ENCODE measurements at regions of chr12 and their contacts with region 1.

Region 1: GRCh38 chr12:52884526-52885293 is 20.2 kb downstream of the KRT8 start:
- DNase-seq: peak; percentile 66
- ATAC-seq: peak; percentile 83
- H3K4me3 Mint-ChIP-seq: no peak overlapping the region
- H3K27ac Mint-ChIP-seq: no peak overlapping the region
- H3K4me1 Mint-ChIP-seq: peaks cover 5% of the 10 kb centered on the region
- H3K27me3 Mint-ChIP-seq: peaks cover 31% of the 10 kb centered on the region
- CTCF ChIP-seq: peak; percentile 69

Region 2: DNA sequence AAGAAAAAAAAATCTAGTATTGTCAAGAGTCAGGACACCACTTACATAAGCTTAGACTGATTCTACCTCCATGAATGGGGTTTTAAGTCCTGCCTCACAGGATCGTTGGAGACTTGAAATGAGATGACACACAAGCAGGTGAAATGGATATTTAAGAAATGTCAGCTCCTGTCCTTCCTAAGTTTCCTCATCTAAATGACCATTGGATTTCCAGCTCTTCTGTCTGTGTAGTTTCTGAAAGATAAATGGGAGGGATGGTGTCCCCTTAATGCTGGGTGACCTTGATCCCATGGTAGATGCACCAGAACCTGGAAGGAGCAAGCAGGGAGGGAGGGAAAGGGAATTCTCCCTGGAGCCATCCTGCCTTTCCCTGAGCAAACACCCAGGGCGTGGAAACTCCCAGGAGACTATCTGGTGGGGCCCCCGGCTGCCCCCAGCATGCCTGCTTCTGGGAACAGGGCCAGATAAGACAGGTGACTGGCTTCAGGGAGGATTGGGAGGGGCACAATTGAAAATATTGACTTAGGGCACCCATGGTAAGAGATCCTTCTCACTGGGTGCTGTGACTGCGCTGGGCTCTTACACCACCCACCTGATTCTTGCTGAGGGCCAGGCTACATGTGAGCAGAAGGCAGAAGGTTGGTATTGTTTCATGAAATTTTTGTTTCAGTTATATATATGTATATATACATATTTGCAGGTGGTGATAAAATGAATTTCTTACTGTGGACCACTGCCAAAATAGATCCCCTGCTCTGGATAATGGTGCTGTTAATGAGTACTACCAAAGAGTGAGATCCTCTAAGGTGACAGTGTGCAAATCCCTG is 10.6 kb after region 1 on chr12:
- CTCF ChIA-PET with region 1: interaction called, 19 read pairs
- POLR2A ChIA-PET with region 1: no interaction called
- intact Hi-C with region 1: no loop called
- DNase-seq: no peak
- ATAC-seq: no peak
- H3K4me3 Mint-ChIP-seq: no peak overlapping the region
- H3K27ac Mint-ChIP-seq: no peak overlapping the region
- H3K4me1 Mint-ChIP-seq: no peaks in the 10 kb centered on the region
- H3K27me3 Mint-ChIP-seq: peaks cover 22% of the 10 kb centered on the region
- CTCF ChIP-seq: no peak